IMR-90 (cell line): ENCODE measurements at regions of chr14 and their contacts with region 1.

Region 1: DNA sequence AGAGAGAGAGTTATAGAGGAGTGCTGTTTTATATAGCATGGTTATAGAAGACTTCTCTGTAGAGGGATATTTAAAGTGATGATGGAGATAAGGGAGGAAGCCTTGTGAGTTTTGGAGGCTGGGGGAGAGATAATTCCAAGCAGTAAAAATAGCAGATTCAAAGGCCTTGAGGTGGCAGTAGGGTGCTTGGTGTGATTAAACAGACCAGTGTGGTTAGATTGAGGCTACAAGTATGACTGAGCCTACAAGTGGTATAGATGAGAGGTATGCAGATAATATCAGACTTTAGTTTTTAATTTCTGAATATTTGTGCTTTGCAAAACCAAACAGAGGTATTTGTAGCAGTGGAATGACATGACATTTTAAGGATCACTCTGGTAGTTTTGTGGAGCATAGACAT is 20.3 kb downstream of the FANCM start:
- DNase-seq: peak; percentile 4
- ATAC-seq: no peak
- H3K4me3 ChIP-seq: no peak overlapping the region
- H3K27ac ChIP-seq: no peak overlapping the region
- H3K4me1 ChIP-seq: no peaks in the 10 kb centered on the region
- H3K27me3 ChIP-seq: no peaks in the 10 kb centered on the region
- CTCF ChIP-seq: 0 out of 2 replicates have a peak, but pooled peaks have one; percentile 17
- POLR2A ChIP-seq: no peak
- RAD21 ChIP-seq: no peak

Region 2: DNA sequence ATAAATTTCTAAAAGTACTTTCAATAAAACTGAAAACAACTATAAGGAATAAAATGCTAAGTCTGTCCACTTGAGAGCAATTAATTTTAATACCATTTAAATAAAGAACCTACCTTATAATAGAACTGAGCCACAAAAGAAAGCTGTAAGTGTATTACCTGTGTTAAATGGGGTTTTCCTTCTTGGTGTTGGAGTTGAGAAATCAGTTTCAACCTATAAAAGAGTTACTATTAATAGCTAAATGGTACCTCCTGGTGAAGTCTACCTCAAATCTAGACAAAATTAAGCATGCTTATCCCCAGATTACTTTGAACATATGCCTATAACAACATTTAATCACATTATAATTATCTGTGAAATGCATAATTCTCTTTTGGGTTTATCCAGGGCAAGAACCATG is 48.2 kb after region 1 on chr14:
- CTCF ChIA-PET with region 1: no interaction called
- POLR2A ChIA-PET with region 1: no interaction called
- dilution Hi-C with region 1: no loop called
- in situ Hi-C with region 1: no loop called
- intact Hi-C with region 1: loop called (anchors 2 kb)
- DNase-seq: no peak
- ATAC-seq: no peak
- H3K4me3 ChIP-seq: no peak overlapping the region
- H3K27ac ChIP-seq: no peak overlapping the region
- H3K4me1 ChIP-seq: no peaks in the 10 kb centered on the region
- H3K27me3 ChIP-seq: no peaks in the 10 kb centered on the region
- CTCF ChIP-seq: no peak
- POLR2A ChIP-seq: no peak
- RAD21 ChIP-seq: no peak